ENCODE measurements at regions of chr7 and their contacts with region 1.

Region 1: GRCh38 chr7:1664711-1665548 is 5.1 kb upstream of the ELFN1 start:
- DNase-seq: peak; percentile 86

Region 2: DNA sequence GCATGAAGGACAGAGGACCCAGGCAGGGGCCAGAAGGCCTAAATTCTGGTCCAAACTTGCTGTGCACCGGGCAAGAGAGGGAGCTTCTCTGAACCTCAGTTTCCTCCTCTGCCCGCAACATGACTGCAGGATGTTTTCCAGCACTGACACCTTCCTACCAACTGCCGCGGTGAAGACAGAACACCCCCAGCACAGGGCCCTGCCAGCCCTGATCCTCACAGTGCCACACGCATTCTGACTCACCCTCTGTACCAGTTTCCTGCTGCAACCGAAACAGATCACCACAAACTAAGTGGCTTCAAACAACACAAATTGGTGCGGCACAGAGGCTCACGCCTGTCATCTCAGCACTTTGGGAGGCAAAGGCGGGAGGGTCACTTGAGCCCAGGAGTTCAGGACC is 549.7 kb after region 1 on chr7:
- intact Hi-C with region 1: loop called (anchors 5 to 10 kb)
- DNase-seq: no peak